ENCODE measurements at regions of chr16 and their contacts with region 1.

Region 1: GRCh38 chr16:67561824-67562525 is 351 bp upstream of the CTCF start:
- DNase-seq: peak; percentile 93 to 98 (median 96)
- ATAC-seq: peak; percentile 86
- H3K4me3 ChIP-seq: peak overlapping the region; percentile 72
- H3K4me3 Mint-ChIP-seq: peak overlapping the region; percentile 85 to 93 (median 90)
- H3K27ac ChIP-seq: peak overlapping the region; percentile 98
- H3K27ac Mint-ChIP-seq: peak overlapping the region; percentile 90 to 99 (median 96)
- H3K4me1 ChIP-seq: peaks cover 30 to 36% of the 10 kb centered on the region in 2 donors
- H3K4me1 Mint-ChIP-seq: peaks cover 28 to 64% (median 46%) of the 10 kb centered on the region in 7 donors
- H3K27me3 ChIP-seq: no peaks in the 10 kb centered on the region
- H3K27me3 Mint-ChIP-seq: no peaks in the 10 kb centered on the region

Region 2: GRCh38 chr16:67226804-67227557 is 335.0 kb before region 1 on chr16 and contains the start of gene TMEM208:
- CTCF ChIA-PET with region 1: no interaction called
- POLR2A ChIA-PET with region 1: interaction called, 4 read pairs
- intact Hi-C with region 1: loop called in 1 of 2 experiments (anchors 5 kb)
- DNase-seq: peak; percentile 94 to 99 (median 97)
- ATAC-seq: peak; percentile 99
- H3K4me3 ChIP-seq: peak within 1 kb of the TSS; percentile 90
- H3K4me3 Mint-ChIP-seq: peak within 1 kb of the TSS; percentile 94 to 100 (median 98)
- H3K27ac ChIP-seq: peak within 1 kb of the TSS; percentile 85
- H3K27ac Mint-ChIP-seq: peak within 1 kb of the TSS; percentile 93 to 100 (median 99)
- H3K4me1 ChIP-seq: peaks cover 14 to 38% of the 10 kb centered on the region in 2 donors
- H3K4me1 Mint-ChIP-seq: peaks cover 37 to 62% (median 50%) of the 10 kb centered on the region in 7 donors
- H3K27me3 ChIP-seq: no peaks in the 10 kb centered on the region
- H3K27me3 Mint-ChIP-seq: no peaks in the 10 kb centered on the region
- total RNA-seq, gene TMEM208: 27.6 to 44.8 (median 32.7) TPM

Region 3: DNA sequence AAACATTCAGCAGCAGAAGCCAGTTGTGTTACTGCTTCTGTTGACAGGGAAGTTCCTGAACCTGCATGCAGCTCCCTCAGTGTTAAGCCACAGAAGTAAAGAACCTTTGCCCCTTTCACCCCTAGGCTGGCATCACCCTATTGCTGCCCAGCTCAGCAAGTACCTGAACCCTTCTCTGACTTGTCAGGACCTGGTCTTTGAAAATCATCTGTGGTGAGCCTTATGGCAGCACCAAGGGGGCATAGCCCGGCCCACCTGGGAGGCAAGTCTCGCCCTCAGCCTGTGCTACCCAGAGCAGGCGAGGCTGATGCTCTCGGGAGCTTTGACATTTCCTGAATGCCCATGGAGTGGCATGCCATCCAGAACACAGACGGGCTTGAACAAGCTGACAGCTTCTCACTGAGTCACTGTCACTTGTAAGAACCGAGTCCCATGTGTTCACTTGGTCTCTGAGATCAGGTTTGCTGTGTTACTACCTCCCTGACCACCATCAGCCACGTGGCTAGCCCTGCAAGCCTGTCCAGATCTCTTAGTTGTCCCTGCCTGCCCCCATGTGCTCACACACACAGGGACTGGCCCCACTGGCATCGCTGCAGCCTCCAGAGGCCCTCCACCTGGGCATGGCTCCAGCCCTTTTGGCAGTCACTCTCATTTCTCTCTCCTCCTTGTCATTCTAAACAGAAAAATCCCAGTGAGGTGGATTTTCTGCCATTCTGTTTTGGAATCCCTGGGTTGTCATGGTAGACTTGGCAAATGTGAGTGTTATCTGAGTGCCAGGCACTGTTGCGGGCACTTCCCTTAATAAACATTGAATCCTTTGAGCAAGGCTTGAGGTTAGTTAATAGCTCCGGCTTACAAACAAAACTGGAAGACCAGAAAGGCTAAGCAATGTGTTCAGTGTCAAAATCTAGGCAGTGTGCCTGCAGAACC is 80.1 kb after region 1 on chr16:
- CTCF ChIA-PET with region 1: interaction called, 14 read pairs
- POLR2A ChIA-PET with region 1: interaction called, 80 read pairs
- intact Hi-C with region 1: loop called (anchors 1 kb)
- DNase-seq: no peak
- ATAC-seq: no peak
- H3K4me3 ChIP-seq: no peak overlapping the region
- H3K4me3 Mint-ChIP-seq: no peak overlapping the region
- H3K27ac ChIP-seq: no peak overlapping the region
- H3K27ac Mint-ChIP-seq: peak overlapping the region in 2 of 9 donors; percentile 55 to 75
- H3K4me1 ChIP-seq: peaks cover 9 to 15% of the 10 kb centered on the region in 2 donors
- H3K4me1 Mint-ChIP-seq: peaks cover 0 to 24% (median 13%) of the 10 kb centered on the region in 7 donors
- H3K27me3 ChIP-seq: no peaks in the 10 kb centered on the region
- H3K27me3 Mint-ChIP-seq: no peaks in the 10 kb centered on the region

Region 4: GRCh38 chr16:67667817-67668494 is 106.0 kb after region 1 on chr16:
- CTCF ChIA-PET with region 1: interaction called, 12 read pairs
- POLR2A ChIA-PET with region 1: interaction called, 23 read pairs
- intact Hi-C with region 1: loop called (anchors 1 kb)
- DNase-seq: peak; percentile 61 to 88 (median 82)
- ATAC-seq: peak; percentile 93
- H3K4me3 ChIP-seq: peak overlapping the region; percentile 56
- H3K4me3 Mint-ChIP-seq: peak overlapping the region; percentile 42 to 96 (median 82)
- H3K27ac ChIP-seq: peak overlapping the region; percentile 73
- H3K27ac Mint-ChIP-seq: peak overlapping the region in 6 of 9 donors; percentile 31 to 67 (median 58)
- H3K4me1 ChIP-seq: peaks cover 9 to 12% of the 10 kb centered on the region in 2 donors
- H3K4me1 Mint-ChIP-seq: peaks cover 10 to 32% (median 17%) of the 10 kb centered on the region in 7 donors
- H3K27me3 ChIP-seq: no peaks in the 10 kb centered on the region
- H3K27me3 Mint-ChIP-seq: no peaks in the 10 kb centered on the region

Region 5: GRCh38 chr16:67841764-67842508 is 280.0 kb after region 1 on chr16 and contains the start of gene THAP11:
- CTCF ChIA-PET with region 1: no interaction called
- POLR2A ChIA-PET with region 1: no interaction called
- intact Hi-C with region 1: loop called (anchors 1 kb)
- DNase-seq: peak; percentile 91 to 99 (median 96)
- ATAC-seq: peak; percentile 76
- H3K4me3 ChIP-seq: peak within 1 kb of the TSS; percentile 100
- H3K4me3 Mint-ChIP-seq: peak within 1 kb of the TSS; percentile 94 to 97 (median 96)
- H3K27ac ChIP-seq: peak within 1 kb of the TSS; percentile 99
- H3K27ac Mint-ChIP-seq: peak within 1 kb of the TSS; percentile 94 to 98 (median 97)
- H3K4me1 ChIP-seq: peaks cover 34 to 36% of the 10 kb centered on the region in 2 donors
- H3K4me1 Mint-ChIP-seq: peaks cover 18 to 41% (median 36%) of the 10 kb centered on the region in 7 donors
- H3K27me3 ChIP-seq: no peaks in the 10 kb centered on the region
- H3K27me3 Mint-ChIP-seq: no peaks in the 10 kb centered on the region
- total RNA-seq, gene THAP11: 29.0 to 62.7 (median 44.6) TPM

Region 6: DNA sequence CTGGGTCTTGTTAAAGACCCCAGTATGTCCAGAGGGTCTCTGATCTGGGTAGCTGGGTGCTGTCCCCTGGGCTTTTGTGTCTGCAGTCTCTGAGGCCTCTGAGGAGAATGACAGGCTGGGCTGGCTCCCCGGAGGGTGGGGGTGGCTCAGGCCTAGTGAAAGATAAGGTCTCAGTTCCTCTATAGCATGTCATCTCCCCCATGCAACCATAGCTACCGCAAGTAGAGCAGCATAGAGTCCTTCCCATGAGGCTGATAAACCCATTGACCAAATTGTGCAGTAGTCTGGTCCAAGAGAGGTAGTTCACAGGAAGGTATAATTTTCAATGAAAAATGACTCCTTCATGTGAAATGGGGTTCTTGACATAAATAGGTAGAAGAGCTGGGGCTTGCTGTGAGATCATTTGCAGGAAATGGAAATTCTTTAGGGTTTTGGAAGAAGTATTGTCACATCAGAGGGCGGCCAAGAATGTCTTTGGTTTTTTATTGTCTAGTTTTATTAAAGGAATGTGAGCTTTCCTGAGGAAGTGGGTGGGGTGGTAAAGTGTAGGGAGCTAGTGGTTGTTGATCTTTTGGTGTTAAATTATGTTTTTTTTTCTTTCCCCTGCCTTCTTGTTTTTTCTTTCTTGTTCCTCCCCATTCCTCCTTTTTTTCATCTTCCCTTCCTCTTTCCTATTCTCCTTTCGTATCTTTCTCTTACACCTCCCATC is 727.8 kb after region 1 on chr16:
- CTCF ChIA-PET with region 1: no interaction called
- POLR2A ChIA-PET with region 1: no interaction called
- intact Hi-C with region 1: loop called in 1 of 2 experiments (anchors 10 kb)
- DNase-seq: peak in 6 of 9 donors; percentile 20 to 57 (median 52)
- ATAC-seq: peak; percentile 75
- H3K4me3 ChIP-seq: peak overlapping the region; percentile 2
- H3K4me3 Mint-ChIP-seq: peak overlapping the region; percentile 43 to 87 (median 68)
- H3K27ac ChIP-seq: peak overlapping the region; percentile 68
- H3K27ac Mint-ChIP-seq: peak overlapping the region; percentile 84 to 95 (median 90)
- H3K4me1 ChIP-seq: peaks cover 76 to 83% of the 10 kb centered on the region in 2 donors
- H3K4me1 Mint-ChIP-seq: peaks cover 70 to 97% (median 87%) of the 10 kb centered on the region in 7 donors
- H3K27me3 ChIP-seq: no peaks in the 10 kb centered on the region
- H3K27me3 Mint-ChIP-seq: no peaks in the 10 kb centered on the region

Measured in naive thymus-derived CD4-positive, alpha-beta T cell (primary cell).